ENCODE measurements at regions of chr20 and their contacts with region 1.

Region 1: GRCh38 chr20:16801919-16802911 is 54.1 kb downstream of the OTOR start:
- DNase-seq: peak; percentile 69
- H3K4me3 Mint-ChIP-seq: no peak overlapping the region
- H3K27ac Mint-ChIP-seq: no peak overlapping the region
- H3K4me1 Mint-ChIP-seq: no peaks in the 10 kb centered on the region
- H3K27me3 Mint-ChIP-seq: peaks cover 30% of the 10 kb centered on the region

Region 2: GRCh38 chr20:16729565-16730456 is 72.4 kb before region 1 on chr20 and contains the start of gene SNRPB2:
- CTCF ChIA-PET with region 1: no interaction called
- POLR2A ChIA-PET with region 1: no interaction called
- intact Hi-C with region 1: no loop called
- DNase-seq: peak; percentile 95
- H3K4me3 Mint-ChIP-seq: peak within 1 kb of the TSS; percentile 100
- H3K27ac Mint-ChIP-seq: peak within 1 kb of the TSS; percentile 99
- H3K4me1 Mint-ChIP-seq: peaks cover 48% of the 10 kb centered on the region
- H3K27me3 Mint-ChIP-seq: peaks cover 13% of the 10 kb centered on the region
- total RNA-seq, gene SNRPB2: 109 to 110 TPM

Region 3: GRCh38 chr20:16747291-16747827 is 54.9 kb before region 1 on chr20:
- CTCF ChIA-PET with region 1: no interaction called
- POLR2A ChIA-PET with region 1: no interaction called
- intact Hi-C with region 1: no loop called
- DNase-seq: no peak
- H3K4me3 Mint-ChIP-seq: no peak overlapping the region
- H3K27ac Mint-ChIP-seq: no peak overlapping the region
- H3K4me1 Mint-ChIP-seq: no peaks in the 10 kb centered on the region
- H3K27me3 Mint-ChIP-seq: peaks cover 5% of the 10 kb centered on the region

Region 4: DNA sequence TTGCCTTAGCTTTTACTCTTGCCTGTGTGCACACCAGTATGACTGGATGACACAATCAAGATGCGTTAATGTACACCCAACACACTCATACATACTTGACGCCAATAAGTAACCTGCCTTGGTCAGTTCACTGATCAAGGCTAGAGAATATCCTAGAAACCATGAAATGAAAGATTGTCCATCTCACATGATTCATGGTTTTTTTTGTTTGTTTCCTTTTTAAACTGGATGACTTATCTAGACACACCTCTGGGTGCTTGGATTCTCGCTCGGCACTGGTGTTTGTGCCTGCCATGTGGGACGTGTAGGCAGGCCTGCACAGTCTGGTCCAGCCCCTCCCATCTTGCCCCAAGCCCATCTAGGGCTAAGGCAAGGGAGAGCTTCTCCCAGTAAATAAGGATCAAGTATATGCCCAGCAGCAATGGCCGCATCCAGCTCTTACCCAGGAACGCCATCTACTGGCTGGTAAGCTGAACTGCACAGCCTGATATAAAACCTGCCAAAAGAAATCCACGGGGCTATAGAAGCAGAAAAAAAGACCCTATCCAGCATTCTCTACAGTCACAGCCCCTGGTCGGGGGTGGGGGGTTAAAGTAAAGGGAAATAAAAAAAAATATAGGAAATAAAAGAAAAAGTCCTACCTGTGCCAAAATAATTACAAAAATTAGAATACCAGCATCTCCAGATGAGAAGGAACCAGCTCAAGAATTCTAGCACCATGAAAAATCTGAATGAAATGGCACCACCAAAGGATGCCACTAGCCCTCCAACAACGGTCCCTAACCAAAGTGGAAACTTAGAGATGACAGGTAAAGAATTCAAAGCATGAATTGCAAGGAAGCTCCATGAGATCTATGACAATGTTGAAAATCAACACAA is 19.2 kb after region 1 on chr20:
- CTCF ChIA-PET with region 1: interaction called, 159 read pairs
- POLR2A ChIA-PET with region 1: no interaction called
- intact Hi-C with region 1: loop called (anchors 1 kb)
- DNase-seq: peak; percentile 35
- H3K4me3 Mint-ChIP-seq: no peak overlapping the region
- H3K27ac Mint-ChIP-seq: no peak overlapping the region
- H3K4me1 Mint-ChIP-seq: no peaks in the 10 kb centered on the region
- H3K27me3 Mint-ChIP-seq: peaks cover 16% of the 10 kb centered on the region

Region 5: DNA sequence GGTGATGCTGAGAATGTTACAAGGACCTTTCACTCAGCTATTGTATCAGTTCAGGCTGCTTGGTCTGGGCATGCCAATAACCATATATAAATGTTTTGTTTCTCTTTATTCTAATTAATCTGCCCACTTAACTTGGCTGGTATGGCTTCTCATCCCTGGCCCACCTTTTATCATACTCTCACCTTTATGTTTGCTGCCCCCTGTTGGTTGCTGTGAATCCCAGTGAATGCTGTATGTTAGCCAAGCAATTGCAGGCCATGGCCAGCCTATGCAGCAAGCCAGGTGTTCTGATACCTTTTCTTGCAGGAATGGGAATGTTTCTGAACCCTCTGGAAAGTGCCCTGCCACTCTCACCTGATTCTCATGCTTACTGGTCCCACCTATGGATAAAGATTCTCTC is 479.3 kb after region 1 on chr20:
- CTCF ChIA-PET with region 1: no interaction called
- POLR2A ChIA-PET with region 1: no interaction called
- intact Hi-C with region 1: loop called (anchors 2 kb)
- DNase-seq: peak; percentile 10
- H3K4me3 Mint-ChIP-seq: no peak overlapping the region
- H3K27ac Mint-ChIP-seq: no peak overlapping the region
- H3K4me1 Mint-ChIP-seq: no peaks in the 10 kb centered on the region
- H3K27me3 Mint-ChIP-seq: no peaks in the 10 kb centered on the region

Region 6: DNA sequence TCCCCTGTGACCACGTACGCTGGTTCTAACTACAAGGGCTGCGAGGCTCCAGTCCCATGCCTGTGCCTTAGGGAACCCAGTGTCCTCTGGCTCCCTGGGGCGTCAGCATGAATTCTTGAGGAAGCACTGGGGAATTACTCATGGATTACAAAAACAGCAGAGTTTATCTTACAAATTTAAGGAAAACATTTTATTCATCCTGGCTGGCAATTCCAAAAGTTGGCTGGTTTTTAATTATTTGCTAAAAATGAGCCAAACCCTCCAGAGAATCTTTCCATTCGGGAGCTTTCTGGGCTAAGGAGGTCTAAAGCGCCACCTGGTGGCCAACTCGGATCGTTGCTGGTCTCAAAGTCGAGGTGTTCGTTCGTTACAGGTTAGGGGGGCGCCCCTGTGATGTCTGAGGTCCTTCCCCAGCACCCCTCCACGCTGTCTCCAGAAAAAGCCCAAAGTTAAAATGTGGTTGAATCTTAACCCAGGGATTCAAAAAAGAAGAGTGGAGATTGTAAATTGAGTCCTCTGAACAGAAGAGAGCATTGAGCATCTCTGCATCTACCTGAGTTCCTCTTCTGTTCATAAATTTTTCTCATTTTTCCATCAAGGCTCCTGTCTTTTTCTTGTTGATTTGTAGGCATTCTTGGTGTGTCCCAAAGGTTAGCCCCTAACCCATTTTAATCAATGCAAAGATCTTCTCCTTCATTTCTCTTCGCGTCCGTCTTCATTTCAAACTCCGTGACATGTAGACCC is 629.6 kb after region 1 on chr20:
- CTCF ChIA-PET with region 1: interaction called, 84 read pairs
- POLR2A ChIA-PET with region 1: no interaction called
- intact Hi-C with region 1: no loop called
- DNase-seq: peak; percentile 57
- H3K4me3 Mint-ChIP-seq: no peak overlapping the region
- H3K27ac Mint-ChIP-seq: no peak overlapping the region
- H3K4me1 Mint-ChIP-seq: no peaks in the 10 kb centered on the region
- H3K27me3 Mint-ChIP-seq: peaks cover 17% of the 10 kb centered on the region

Region 7: GRCh38 chr20:18276821-18277220 is 1474.6 kb after region 1 on chr20:
- CTCF ChIA-PET with region 1: no interaction called
- POLR2A ChIA-PET with region 1: no interaction called
- intact Hi-C with region 1: loop called (anchors 5 kb)
- DNase-seq: peak; percentile 84
- H3K4me3 Mint-ChIP-seq: no peak overlapping the region
- H3K27ac Mint-ChIP-seq: no peak overlapping the region
- H3K4me1 Mint-ChIP-seq: peaks cover 2% of the 10 kb centered on the region
- H3K27me3 Mint-ChIP-seq: peaks cover 32% of the 10 kb centered on the region